Right lobe of liver (tissue), 6 donors: ENCODE measurements at regions of chr14 and their contacts with region 1.

Region 1: GRCh38 chr14:91418387-91419043 is 895 bp upstream of the CCDC88C start:
- DNase-seq: peak; percentile 71 to 83 (median 77)
- ATAC-seq: peak; percentile 77 to 80 (median 79)
- H3K4me3 ChIP-seq: peak overlapping the region in 2 of 3 donors; percentile 38 to 70
- H3K27ac ChIP-seq: peak overlapping the region in 1 of 3 donors; percentile 7
- H3K4me1 ChIP-seq: peaks cover 0 to 19% (median 0%) of the 10 kb centered on the region in 4 donors
- H3K27me3 ChIP-seq: no peaks in the 10 kb centered on the region
- CTCF ChIP-seq: peak; percentile 89 to 95 (median 94)
- POLR2A ChIP-seq: no peak

Region 2: GRCh38 chr14:91324606-91325575 is 93.6 kb before region 1 on chr14:
- intact Hi-C with region 1: loop called in 1 of 2 experiments (anchors 5 kb)
- DNase-seq: no peak
- ATAC-seq: no peak
- H3K4me3 ChIP-seq: no peak overlapping the region
- H3K27ac ChIP-seq: peak overlapping the region in 2 of 3 donors; percentile 25 to 62
- H3K4me1 ChIP-seq: peaks cover 0 to 5% (median under 1%) of the 10 kb centered on the region in 4 donors
- H3K27me3 ChIP-seq: no peaks in the 10 kb centered on the region
- CTCF ChIP-seq: no peak
- POLR2A ChIP-seq: no peak

Region 3: GRCh38 chr14:91693346-91693745 is 274.8 kb after region 1 on chr14:
- intact Hi-C with region 1: no loop called
- DNase-seq: no peak
- ATAC-seq: peak in 2 of 4 donors; percentile 26 to 90
- H3K4me3 ChIP-seq: no peak overlapping the region
- H3K27ac ChIP-seq: no peak overlapping the region
- H3K4me1 ChIP-seq: no peaks in the 10 kb centered on the region
- H3K27me3 ChIP-seq: no peaks in the 10 kb centered on the region
- CTCF ChIP-seq: no peak
- POLR2A ChIP-seq: no peak